ENCODE measurements at regions of chr5 and their contacts with region 1.

Region 1: GRCh38 chr5:53123702-53124101 is 14.1 kb upstream of the MOCS2 start:
- DNase-seq: peak; percentile 11
- H3K4me3 Mint-ChIP-seq: no peak overlapping the region
- H3K27ac Mint-ChIP-seq: no peak overlapping the region
- H3K4me1 Mint-ChIP-seq: peaks cover 5% of the 10 kb centered on the region
- H3K27me3 Mint-ChIP-seq: no peaks in the 10 kb centered on the region
- CTCF ChIP-seq: peak; percentile 12

Region 2: DNA sequence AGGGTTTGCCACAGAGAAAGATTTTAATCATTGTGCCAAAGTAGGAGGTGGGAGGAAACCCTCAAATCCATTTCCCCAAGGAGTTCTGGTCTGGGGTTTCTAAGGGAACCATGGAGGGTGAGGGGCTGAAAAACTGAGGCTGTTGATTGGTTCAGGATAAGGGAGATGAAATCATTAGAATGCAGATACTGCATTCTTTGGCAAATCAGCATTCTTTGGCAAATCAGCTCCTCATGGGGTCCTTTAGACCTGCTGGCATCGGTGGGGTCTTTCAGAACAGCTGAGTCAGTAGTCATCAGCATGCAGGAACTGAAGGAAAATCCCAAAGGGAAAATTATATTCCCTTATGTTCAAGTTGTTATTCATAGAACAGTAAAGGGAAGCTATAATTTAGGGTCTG is 1154.9 kb before region 1 on chr5:
- CTCF ChIA-PET with region 1: no interaction called
- POLR2A ChIA-PET with region 1: no interaction called
- intact Hi-C with region 1: no loop called
- DNase-seq: no peak
- H3K4me3 Mint-ChIP-seq: no peak overlapping the region
- H3K27ac Mint-ChIP-seq: no peak overlapping the region
- H3K4me1 Mint-ChIP-seq: no peaks in the 10 kb centered on the region
- H3K27me3 Mint-ChIP-seq: peaks cover 10% of the 10 kb centered on the region
- CTCF ChIP-seq: no peak

Region 3: DNA sequence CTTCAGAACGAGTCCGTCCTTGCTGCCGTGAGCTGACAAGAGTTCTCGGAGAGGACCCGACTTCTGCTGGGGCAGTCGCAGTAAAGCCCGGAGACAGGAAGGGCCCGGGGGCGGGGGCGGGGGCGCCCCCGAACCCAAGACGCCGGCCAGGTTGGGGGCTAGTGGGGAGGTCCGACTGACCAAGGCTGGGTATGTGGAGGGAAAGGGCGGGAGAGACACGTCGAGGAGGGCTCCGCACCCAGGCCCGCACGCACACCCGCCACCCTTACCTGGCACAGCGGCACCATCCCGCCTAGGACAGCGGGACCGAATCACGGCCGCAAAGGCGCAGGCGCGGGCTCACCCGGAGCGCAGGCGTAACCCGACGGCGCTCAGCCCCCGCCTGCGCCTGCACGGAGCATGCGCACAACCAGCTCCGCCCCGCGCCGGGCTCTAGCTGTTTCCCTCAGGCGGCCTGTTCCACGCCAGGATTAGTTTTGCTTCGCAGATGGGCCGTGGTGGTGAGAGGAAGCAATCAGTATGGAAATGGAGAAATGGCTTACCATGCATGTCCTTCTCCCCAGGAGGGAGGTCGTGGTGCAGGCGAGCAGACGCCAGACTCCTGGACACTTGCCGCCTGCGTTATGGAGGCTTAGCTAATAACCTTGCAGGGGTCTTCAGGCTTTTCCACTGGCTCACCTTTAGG is 14.1 kb before region 1 on chr5 and contains the start of gene MOCS2:
- CTCF ChIA-PET with region 1: interaction called, 10 read pairs
- POLR2A ChIA-PET with region 1: interaction called, 4 read pairs
- intact Hi-C with region 1: no loop called
- DNase-seq: peak; percentile 89
- H3K4me3 Mint-ChIP-seq: peak within 1 kb of the TSS; percentile 97
- H3K27ac Mint-ChIP-seq: peak within 1 kb of the TSS; percentile 80
- H3K4me1 Mint-ChIP-seq: peaks cover 18% of the 10 kb centered on the region
- H3K27me3 Mint-ChIP-seq: no peaks in the 10 kb centered on the region
- CTCF ChIP-seq: no peak
- total RNA-seq, gene MOCS2: 31.4 and 43.0 TPM in 2 replicates

Region 4: GRCh38 chr5:54229041-54229780 is 1105.5 kb after region 1 on chr5:
- CTCF ChIA-PET with region 1: interaction called, 5 read pairs
- POLR2A ChIA-PET with region 1: no interaction called
- intact Hi-C with region 1: loop called (anchors 2 kb)
- DNase-seq: peak; percentile 67
- H3K4me3 Mint-ChIP-seq: no peak overlapping the region
- H3K27ac Mint-ChIP-seq: no peak overlapping the region
- H3K4me1 Mint-ChIP-seq: peaks cover 6% of the 10 kb centered on the region
- H3K27me3 Mint-ChIP-seq: no peaks in the 10 kb centered on the region
- CTCF ChIP-seq: peak; percentile 74

Measured in MCF 10A (cell line).